ENCODE measurements at regions of chr16 and their contacts with region 1.

Region 1: GRCh38 chr16:81461766-81462165 is 17.2 kb downstream of the CMIP start:
- DNase-seq: no peak
- ATAC-seq: peak in 1 of 2 donors; percentile 14

Region 2: DNA sequence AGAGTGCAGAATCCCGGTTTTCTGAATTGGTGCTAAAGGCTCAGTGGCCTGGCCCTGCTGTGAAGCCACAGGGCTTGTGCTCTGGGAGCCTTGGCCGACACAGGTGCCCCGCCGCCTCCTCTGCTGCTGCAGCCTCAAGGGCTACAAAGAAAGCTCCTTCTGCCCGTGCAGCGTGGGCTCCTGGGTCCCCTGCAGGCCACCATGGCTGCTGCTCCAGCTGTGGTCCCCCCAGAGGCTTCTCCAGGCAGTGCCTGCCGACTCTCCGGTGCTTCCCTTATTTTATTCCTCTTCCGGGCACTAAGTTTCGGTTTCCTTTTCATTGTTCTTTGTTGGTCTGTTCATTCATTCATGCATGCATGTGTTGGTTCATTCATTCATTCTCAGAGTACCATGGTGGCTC is 35.9 kb after region 1 on chr16:
- intact Hi-C with region 1: loop called in 1 of 2 experiments (anchors 5 kb)
- DNase-seq: no peak
- ATAC-seq: no peak

Region 3: GRCh38 chr16:81723098-81723723 is 261.4 kb after region 1 on chr16:
- intact Hi-C with region 1: no loop called
- DNase-seq: no peak
- ATAC-seq: peak; percentile 93 to 94